Natural killer cell (primary cell): ENCODE measurements at regions of chr4 and their contacts with region 1.

Region 1: GRCh38 chr4:64016542-64017292 is 392.5 kb downstream of the TECRL start:
- DNase-seq: no peak
- ATAC-seq: no peak
- H3K4me3 ChIP-seq: no peak overlapping the region
- H3K4me3 Mint-ChIP-seq: no peak overlapping the region
- H3K27ac ChIP-seq: no peak overlapping the region
- H3K27ac Mint-ChIP-seq: no peak overlapping the region
- H3K4me1 ChIP-seq: no peaks in the 10 kb centered on the region
- H3K4me1 Mint-ChIP-seq: no peaks in the 10 kb centered on the region
- H3K27me3 ChIP-seq: no peaks in the 10 kb centered on the region
- H3K27me3 Mint-ChIP-seq: no peaks in the 10 kb centered on the region
- CTCF ChIP-seq: no peak

Region 2: DNA sequence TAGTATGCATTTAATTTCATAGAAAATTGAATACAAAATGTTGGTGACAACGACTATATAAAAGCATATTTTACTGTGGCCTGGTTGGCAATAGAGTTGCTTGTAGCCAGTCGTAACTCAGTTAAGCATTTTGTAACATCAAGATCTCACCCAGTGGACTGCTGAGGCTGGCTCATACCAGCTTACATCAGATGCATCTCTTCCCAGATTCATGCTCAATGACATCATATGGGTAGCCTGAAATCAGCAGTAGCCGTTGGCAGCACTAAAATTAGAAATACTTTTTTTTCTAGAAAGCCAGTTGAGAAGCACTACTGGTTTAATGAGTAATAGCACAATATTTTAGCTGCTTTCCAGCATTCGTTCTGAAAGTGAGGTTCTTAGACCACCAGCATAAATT is 51.4 kb after region 1 on chr4:
- intact Hi-C with region 1: loop called (anchors 1 kb)
- DNase-seq: no peak
- ATAC-seq: no peak
- H3K4me3 ChIP-seq: no peak overlapping the region
- H3K4me3 Mint-ChIP-seq: no peak overlapping the region
- H3K27ac ChIP-seq: no peak overlapping the region
- H3K27ac Mint-ChIP-seq: no peak overlapping the region
- H3K4me1 ChIP-seq: no peaks in the 10 kb centered on the region
- H3K4me1 Mint-ChIP-seq: no peaks in the 10 kb centered on the region
- H3K27me3 ChIP-seq: no peaks in the 10 kb centered on the region
- H3K27me3 Mint-ChIP-seq: no peaks in the 10 kb centered on the region
- CTCF ChIP-seq: no peak